ENCODE measurements at regions of chr13 and their contacts with region 1.

Region 1: GRCh38 chr13:28357911-28358433 is 137.0 kb downstream of the FLT1 start:
- DNase-seq: no peak
- ATAC-seq: peak in 5 of 8 donors; percentile 23 to 81 (median 53)
- H3K4me3 ChIP-seq: no peak overlapping the region
- H3K27ac ChIP-seq: peak overlapping the region in 2 of 10 donors; percentile 3 to 34
- H3K4me1 ChIP-seq: peaks cover 0 to 42% (median 31%) of the 10 kb centered on the region in 9 donors
- H3K27me3 ChIP-seq: peaks cover 0 to 15% (median 0%) of the 10 kb centered on the region in 7 donors
- CTCF ChIP-seq: no peak

Region 2: DNA sequence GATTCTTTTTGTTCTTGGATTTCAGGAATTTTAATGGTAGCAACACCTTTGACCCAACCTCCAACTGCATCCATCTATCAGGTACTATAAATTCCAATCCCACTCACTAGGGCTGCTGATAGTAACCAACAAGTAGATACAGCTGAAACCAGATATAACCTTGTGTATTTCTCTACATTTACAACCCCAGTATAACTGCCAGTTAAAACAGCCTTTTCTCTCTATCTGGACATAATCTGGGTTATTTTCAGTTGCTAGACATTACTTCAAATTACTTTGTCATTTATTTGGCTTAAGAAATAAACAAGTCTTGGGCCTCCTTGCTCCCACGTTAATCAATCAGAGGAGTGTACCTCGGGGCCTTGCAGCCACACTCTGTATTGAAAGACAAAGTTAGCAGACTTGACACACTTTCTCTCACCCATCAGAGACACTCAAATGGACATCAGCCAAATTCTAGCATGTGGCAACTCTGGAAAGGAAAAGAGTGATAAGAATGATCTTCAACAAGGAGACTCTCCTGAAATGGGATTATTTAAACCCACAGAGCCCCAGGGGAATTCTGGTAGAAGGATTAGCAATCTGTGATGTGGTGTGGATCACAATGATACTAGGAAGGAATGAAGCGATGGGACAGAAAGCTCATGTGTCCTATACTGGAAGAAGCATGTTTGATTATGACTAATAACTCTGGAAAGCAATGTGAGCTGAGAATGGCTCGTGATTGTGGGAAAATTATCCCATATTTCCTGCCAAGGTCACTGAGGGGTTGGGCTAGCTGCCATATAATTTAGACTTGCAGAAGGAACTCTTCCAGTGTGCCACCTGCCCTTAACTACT is 20.6 kb before region 1 on chr13:
- intact Hi-C with region 1: loop called in 1 of 10 experiments (anchors 2 kb)
- DNase-seq: peak in 1 of 2 donors; percentile 27
- ATAC-seq: peak in 7 of 8 donors; percentile 27 to 54 (median 45)
- H3K4me3 ChIP-seq: no peak overlapping the region
- H3K27ac ChIP-seq: peak overlapping the region in 9 of 10 donors; percentile 34 to 80 (median 43)
- H3K4me1 ChIP-seq: peaks cover 11 to 72% (median 33%) of the 10 kb centered on the region in 9 donors
- H3K27me3 ChIP-seq: peaks cover 0 to 49% (median 0%) of the 10 kb centered on the region in 7 donors
- CTCF ChIP-seq: no peak

Measured in heart right ventricle (tissue), 16 donors.